GM13977 (cell line): ENCODE measurements at regions of chr10 and their contacts with region 1.

Region 1: GRCh38 chr10:95832216-95833041 is 75.3 kb upstream of the CC2D2B start:
- DNase-seq: peak; percentile 60
- CTCF ChIP-seq: no peak

Region 2: GRCh38 chr10:95783741-95784140 is 48.7 kb before region 1 on chr10:
- in situ Hi-C with region 1: loop called (anchors 10 kb)
- DNase-seq: peak; percentile 23
- CTCF ChIP-seq: no peak